ENCODE measurements at regions of chr3 and their contacts with region 1.

Region 1: DNA sequence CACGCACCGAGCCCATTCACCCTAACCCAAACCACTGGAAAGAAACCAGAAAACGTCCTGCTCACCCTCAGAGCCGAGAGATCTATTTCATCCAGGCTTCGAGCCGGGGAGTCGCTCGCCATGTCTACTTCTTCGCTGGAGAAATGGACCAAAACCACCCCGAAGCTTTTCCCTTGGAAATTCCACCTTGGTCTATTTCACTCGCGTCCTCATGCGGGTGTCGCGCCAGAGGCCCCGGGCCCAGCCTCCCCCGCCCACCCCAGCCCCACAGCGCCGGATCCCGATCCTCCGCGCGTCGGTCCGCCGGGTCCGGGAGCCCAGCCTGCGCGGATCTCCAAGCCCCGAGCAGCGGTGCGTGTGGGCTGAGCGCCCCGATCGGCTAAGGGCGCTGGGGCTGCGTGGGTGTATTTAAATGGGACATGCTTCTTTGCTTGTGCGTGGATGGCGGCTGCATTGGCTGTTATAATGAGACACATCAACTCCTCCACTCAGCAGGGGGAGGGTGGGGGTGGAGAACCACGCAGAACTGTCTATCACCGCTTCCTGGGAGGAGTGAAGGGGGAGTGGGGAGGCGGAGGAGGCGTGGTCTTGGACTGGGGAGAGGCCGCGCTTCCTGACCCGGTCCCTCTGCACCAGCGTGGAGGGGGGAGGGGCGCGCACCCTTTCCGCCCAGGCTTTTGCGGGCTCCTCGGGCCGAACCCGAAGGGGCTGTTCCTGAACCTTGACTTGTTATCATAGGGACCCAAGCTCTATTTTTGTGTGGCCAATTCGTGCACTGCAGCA is at the start of gene TNIK:
- DNase-seq: peak; percentile 98
- H3K4me3 Mint-ChIP-seq: peak within 1 kb of the TSS; percentile 96
- H3K27ac Mint-ChIP-seq: peak within 1 kb of the TSS; percentile 91
- H3K4me1 Mint-ChIP-seq: peaks cover 46% of the 10 kb centered on the region
- H3K27me3 Mint-ChIP-seq: no peaks in the 10 kb centered on the region
- total RNA-seq, gene TNIK: 24.5 and 27.4 TPM in 2 replicates

Region 2: GRCh38 chr3:170221924-170222646 is 1238.0 kb before region 1 on chr3 and contains the start of gene PRKCI:
- intact Hi-C with region 1: loop called (anchors 5 kb)
- DNase-seq: peak; percentile 96
- H3K4me3 Mint-ChIP-seq: peak within 1 kb of the TSS; percentile 89
- H3K27ac Mint-ChIP-seq: peak within 1 kb of the TSS; percentile 94
- H3K4me1 Mint-ChIP-seq: peaks cover 23% of the 10 kb centered on the region
- H3K27me3 Mint-ChIP-seq: peaks cover 4% of the 10 kb centered on the region
- total RNA-seq, gene PRKCI: 19.7 and 32.3 TPM in 2 replicates

Region 3: GRCh38 chr3:171187706-171188290 is 272.3 kb before region 1 on chr3:
- intact Hi-C with region 1: loop called (anchors 1 kb)
- DNase-seq: peak; percentile 73
- H3K4me3 Mint-ChIP-seq: no peak overlapping the region
- H3K27ac Mint-ChIP-seq: no peak overlapping the region
- H3K4me1 Mint-ChIP-seq: peaks cover 52% of the 10 kb centered on the region
- H3K27me3 Mint-ChIP-seq: no peaks in the 10 kb centered on the region

Region 4: DNA sequence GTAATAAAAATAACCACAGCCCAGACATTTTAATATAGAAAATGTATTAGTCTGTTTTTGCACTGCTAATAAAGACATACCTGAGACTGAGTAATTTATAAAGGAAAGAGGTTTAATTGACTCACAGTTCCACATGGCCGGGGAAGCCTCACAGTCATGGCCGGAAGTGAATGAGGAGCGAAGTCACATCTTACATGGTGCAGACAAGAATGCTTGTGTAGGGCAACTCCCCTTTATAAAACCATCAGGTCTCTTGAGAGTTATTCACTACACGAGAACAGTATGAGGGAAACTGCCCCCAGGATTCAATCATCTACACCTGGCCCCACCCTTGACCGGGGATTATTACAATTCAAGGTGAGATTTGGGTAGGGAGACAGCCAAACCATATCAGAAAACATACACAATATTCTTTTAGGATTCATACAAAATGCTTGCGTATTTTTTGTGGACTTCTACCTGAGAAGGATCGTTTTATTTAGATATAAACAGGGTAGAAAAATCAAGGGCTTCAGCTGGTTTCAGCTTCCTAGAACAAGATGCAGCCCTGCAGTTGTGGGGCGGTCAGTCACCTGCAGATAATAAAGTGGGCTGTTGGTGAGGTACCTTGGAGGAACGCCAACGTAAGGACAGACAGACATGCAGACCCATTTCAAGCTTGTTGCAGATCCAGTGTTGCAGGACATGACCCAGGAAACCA is 101.8 kb before region 1 on chr3:
- intact Hi-C with region 1: loop called (anchors 5 kb)
- DNase-seq: no peak
- H3K4me3 Mint-ChIP-seq: no peak overlapping the region
- H3K27ac Mint-ChIP-seq: no peak overlapping the region
- H3K4me1 Mint-ChIP-seq: peaks cover 28% of the 10 kb centered on the region
- H3K27me3 Mint-ChIP-seq: no peaks in the 10 kb centered on the region

Region 5: GRCh38 chr3:171491361-171491760 is 31.2 kb after region 1 on chr3:
- intact Hi-C with region 1: loop called (anchors 1 kb)
- DNase-seq: peak; percentile 73
- H3K4me3 Mint-ChIP-seq: peak overlapping the region; percentile 65
- H3K27ac Mint-ChIP-seq: peak overlapping the region; percentile 80
- H3K4me1 Mint-ChIP-seq: peaks cover 50% of the 10 kb centered on the region
- H3K27me3 Mint-ChIP-seq: no peaks in the 10 kb centered on the region

Region 6: GRCh38 chr3:172750368-172751174 is 1290.4 kb after region 1 on chr3 and contains the start of gene ECT2:
- intact Hi-C with region 1: loop called (anchors 1 kb)
- DNase-seq: peak; percentile 99
- H3K4me3 Mint-ChIP-seq: peak within 1 kb of the TSS; percentile 88
- H3K27ac Mint-ChIP-seq: peak within 1 kb of the TSS; percentile 96
- H3K4me1 Mint-ChIP-seq: peaks cover 32% of the 10 kb centered on the region
- H3K27me3 Mint-ChIP-seq: peaks cover 6% of the 10 kb centered on the region
- total RNA-seq, gene ECT2: 36.2 and 40.4 TPM in 2 replicates